Body of pancreas (tissue), 4 donors: ENCODE measurements at regions of chr12 and their contacts with region 1.

Region 1: DNA sequence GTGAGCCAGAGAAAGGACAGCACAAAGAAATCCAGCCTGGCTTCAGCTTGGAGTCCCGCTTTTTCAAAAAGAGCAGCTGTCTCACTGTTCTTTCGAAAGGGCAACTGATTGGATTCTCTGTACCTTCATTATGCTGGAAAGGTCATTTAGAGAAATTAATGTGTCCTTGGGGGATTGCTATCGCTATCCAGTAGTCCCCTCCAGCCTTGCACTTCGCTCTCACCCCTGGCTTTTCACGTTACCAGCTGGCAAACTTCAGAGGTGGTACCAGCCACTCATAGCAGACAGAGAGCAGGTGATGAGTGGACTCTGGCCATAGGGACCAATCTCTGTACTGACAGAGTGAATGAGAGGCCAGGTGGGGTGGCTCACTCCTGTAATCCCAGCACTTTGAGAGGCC is 11.8 kb upstream of the NUAK1 start:
- DNase-seq: no peak
- ATAC-seq: no peak
- H3K4me3 ChIP-seq: no peak overlapping the region
- H3K27ac ChIP-seq: no peak overlapping the region
- H3K4me1 ChIP-seq: peaks cover 11% of the 10 kb centered on the region
- H3K27me3 ChIP-seq: no peaks in the 10 kb centered on the region
- CTCF ChIP-seq: no peak
- POLR2A ChIP-seq: no peak

Region 2: DNA sequence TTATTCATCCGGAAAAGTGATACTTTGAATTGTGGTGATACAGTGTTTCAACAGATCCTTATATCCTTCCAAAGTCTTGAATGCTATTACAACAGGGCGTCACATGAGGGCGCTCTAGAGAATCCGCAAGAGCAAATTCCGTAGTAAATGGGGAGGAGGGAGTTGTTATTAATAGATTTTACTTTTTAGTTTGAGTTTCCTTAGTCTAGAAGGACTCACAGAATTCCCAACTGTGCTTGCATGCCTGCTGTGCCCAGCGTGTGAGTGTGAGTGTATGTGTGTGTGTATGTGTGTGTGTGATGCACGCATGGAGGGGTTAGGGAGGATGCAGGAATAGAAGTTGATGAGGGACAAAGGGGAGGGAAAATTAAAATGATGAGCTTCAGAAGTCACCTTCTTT is 444.8 kb before region 1 on chr12:
- intact Hi-C with region 1: loop called (anchors 10 kb)
- DNase-seq: peak; percentile 56 to 65 (median 58)
- ATAC-seq: peak; percentile 45
- H3K4me3 ChIP-seq: no peak overlapping the region
- H3K27ac ChIP-seq: no peak overlapping the region
- H3K4me1 ChIP-seq: no peaks in the 10 kb centered on the region
- H3K27me3 ChIP-seq: no peaks in the 10 kb centered on the region
- CTCF ChIP-seq: peak; percentile 39 to 68 (median 66)
- POLR2A ChIP-seq: no peak